ENCODE measurements at regions of chr15 and their contacts with region 1.

Region 1: GRCh38 chr15:65326117-65326526 is 21.6 kb downstream of the RNU5B-1 start:
- DNase-seq: peak in 1 of 2 donors; percentile 54
- ATAC-seq: peak in 2 of 4 donors; percentile 26 to 49
- H3K4me3 ChIP-seq: no peak overlapping the region
- H3K27ac ChIP-seq: no peak overlapping the region
- H3K4me1 ChIP-seq: peaks cover 8% of the 10 kb centered on the region
- H3K27me3 ChIP-seq: no peaks in the 10 kb centered on the region
- CTCF ChIP-seq: no peak

Region 2: DNA sequence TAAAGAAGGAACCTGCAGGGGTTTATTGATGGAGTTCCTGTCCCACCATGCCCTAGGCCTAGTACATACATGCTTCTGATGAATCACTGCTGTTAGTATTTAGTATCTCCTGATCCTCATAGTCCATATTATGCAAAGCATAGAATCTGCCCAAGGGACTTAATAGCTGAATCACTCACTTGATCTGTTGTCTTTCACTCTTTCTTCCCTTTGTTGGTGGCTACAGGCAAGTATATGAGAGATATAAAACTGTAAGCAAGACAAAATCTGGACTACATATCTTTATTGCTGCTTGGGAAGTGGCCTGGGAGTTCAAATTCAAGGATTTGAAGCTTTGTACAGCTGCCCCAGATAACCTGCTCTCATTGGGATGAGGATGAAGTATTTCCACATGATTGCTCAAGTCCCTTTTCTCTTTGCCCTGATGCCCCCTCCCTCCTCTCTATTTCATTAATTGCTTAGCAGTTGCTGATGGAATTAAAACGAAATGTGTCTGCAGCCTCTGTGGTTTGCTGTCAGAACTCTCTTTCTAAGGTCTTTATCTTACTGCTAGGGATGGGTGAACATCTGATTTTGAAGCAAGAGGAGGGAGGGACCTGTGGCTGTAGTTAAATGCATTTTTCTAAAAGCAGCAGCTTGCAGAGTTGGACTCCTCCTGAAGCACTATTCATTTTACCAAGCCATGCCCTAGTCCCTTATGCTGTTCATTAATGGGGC is 751.7 kb before region 1 on chr15:
- intact Hi-C with region 1: no loop called
- DNase-seq: no peak
- ATAC-seq: no peak
- H3K4me3 ChIP-seq: no peak overlapping the region
- H3K27ac ChIP-seq: no peak overlapping the region
- H3K4me1 ChIP-seq: no peaks in the 10 kb centered on the region
- H3K27me3 ChIP-seq: no peaks in the 10 kb centered on the region
- CTCF ChIP-seq: no peak

Region 3: DNA sequence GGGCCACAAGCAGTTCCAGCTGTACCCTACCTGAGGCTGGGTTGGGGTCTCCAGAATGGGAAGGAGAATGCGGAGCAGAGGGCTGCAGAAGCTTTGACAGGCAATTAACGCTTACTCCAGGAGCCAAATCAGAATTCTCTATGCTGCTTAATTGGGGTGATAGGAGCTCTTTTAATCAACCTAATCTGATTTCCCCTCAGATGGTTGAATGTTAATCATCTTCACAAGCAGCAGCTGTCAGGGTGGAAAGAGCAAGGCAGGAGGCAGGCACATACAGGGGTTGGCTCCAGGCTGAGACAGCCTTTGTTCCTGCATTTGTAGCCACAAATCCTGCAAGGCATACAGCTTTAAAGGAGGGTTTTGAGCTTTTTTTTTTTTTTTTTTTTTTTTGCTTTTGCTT is 117.5 kb before region 1 on chr15:
- intact Hi-C with region 1: no loop called
- DNase-seq: no peak
- ATAC-seq: no peak
- H3K4me3 ChIP-seq: no peak overlapping the region
- H3K27ac ChIP-seq: no peak overlapping the region
- H3K4me1 ChIP-seq: peaks cover 18% of the 10 kb centered on the region
- H3K27me3 ChIP-seq: no peaks in the 10 kb centered on the region
- CTCF ChIP-seq: no peak

Region 4: GRCh38 chr15:65374821-65375401 is 48.8 kb after region 1 on chr15:
- intact Hi-C with region 1: loop called in 1 of 2 experiments (anchors 2 kb)
- DNase-seq: no peak
- ATAC-seq: no peak
- H3K4me3 ChIP-seq: no peak overlapping the region
- H3K27ac ChIP-seq: no peak overlapping the region
- H3K4me1 ChIP-seq: peaks cover 8% of the 10 kb centered on the region
- H3K27me3 ChIP-seq: peaks cover 0 to 9% (median 6%) of the 10 kb centered on the region in 3 donors
- CTCF ChIP-seq: no peak

Measured in psoas muscle (tissue), 8 donors.